ENCODE measurements at regions of chr15 and their contacts with region 1.

Region 1: DNA sequence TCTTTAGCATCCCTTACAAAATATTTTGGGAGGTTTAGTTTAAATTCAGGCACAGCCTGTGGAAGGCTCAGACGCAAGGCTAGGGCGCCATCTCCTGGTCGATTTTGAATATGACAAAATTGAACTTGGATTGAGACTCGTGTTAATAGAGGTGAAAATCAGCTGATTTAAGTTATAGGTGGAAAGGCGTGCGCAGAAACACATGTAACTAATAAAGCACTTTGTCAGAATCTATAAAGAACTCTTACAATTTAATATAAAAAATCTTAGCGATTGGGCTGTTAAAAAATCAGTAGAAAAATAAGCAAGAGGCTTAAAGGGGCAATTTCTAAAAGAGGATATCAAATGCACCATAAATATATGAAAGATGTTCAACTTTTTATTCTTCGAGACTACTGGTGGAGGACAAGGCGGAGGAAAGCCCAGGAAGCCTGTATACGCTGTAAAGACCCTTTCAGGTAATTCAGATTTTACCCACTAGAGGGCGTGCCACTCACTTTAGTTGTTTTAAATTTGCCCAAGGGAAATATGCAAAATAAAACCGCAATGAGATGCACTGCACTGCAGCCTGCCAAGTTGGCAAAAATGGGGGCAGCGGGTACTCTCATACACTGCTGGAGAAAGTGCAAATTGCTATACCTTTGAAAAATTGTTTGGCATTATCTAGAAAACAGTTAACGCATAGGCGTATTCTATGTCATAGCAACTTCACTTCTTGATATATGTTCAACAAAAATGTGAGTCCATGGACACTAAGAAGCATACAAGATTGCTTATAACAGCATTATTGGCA is 64.7 kb downstream of the SLC30A4 start:
- DNase-seq: peak; percentile 72
- H3K4me3 Mint-ChIP-seq: peak overlapping the region; percentile 76
- H3K27ac Mint-ChIP-seq: peak overlapping the region; percentile 91
- H3K4me1 Mint-ChIP-seq: peaks cover 49% of the 10 kb centered on the region
- H3K27me3 Mint-ChIP-seq: no peaks in the 10 kb centered on the region

Region 2: DNA sequence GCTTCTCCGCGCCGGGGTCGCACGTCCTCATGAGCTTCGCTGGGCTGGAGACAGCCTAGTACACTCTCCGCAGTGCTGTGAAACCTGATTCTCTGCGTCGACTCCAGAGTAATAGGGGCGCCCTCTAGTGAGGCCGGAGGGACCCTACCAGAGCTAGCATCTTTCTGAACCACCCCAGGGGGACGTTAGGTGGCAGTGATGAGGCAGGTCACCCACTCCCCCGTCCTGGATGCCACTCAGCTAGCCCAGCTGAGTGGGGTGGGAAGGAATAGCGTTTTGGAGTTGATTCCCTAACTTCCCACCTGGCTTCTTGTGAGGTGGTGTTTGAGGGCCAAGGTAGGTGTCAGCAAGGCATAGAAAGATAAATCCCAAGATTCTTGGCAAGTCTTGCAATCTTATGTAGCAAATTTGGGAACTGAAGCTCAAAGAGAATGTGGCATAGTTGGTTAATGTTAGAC is 339.7 kb before region 1 on chr15:
- intact Hi-C with region 1: loop called (anchors 2 kb)
- DNase-seq: peak; percentile 75
- H3K4me3 Mint-ChIP-seq: peak overlapping the region; percentile 70
- H3K27ac Mint-ChIP-seq: peak overlapping the region; percentile 74
- H3K4me1 Mint-ChIP-seq: peaks cover 26% of the 10 kb centered on the region
- H3K27me3 Mint-ChIP-seq: peaks cover 67% of the 10 kb centered on the region

Region 3: DNA sequence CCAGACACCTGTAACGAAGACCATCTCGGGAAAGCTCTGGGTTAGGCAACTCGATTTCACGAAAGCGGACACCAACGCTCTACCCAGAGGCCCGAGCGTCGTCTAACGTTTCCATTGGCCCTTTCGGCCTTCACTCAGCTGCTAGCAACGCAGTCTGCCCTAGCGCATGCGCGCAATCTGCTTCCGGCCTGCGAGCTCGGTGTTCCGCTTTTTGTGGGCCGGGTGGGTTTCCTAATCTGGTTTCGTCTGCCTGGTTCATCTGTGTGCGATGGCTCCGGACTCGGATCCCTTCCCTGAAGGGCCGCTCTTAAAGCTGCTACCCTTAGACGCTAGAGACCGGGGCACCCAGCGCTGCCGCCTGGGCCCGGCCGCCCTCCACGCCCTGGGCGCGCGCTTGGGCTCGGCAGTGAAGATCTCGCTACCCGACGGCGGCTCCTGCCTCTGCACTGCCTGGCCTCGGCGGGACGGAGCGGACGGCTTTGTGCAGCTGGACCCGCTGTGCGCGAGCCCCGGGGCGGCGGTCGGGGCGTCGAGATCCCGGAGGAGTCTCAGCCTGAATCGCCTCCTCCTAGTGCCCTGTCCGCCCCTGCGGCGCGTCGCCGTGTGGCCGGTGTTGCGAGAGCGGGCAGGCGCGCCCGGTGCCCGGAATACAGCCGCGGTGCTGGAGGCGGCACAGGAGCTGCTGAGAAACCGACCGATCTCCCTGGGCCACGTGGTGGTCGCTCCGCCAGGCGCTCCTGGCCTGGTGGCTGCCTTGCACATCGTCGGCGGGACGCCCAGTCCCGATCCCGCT is 55.5 kb before region 1 on chr15:
- intact Hi-C with region 1: loop called (anchors 1 kb)
- DNase-seq: peak; percentile 92
- H3K4me3 Mint-ChIP-seq: peak overlapping the region; percentile 94
- H3K27ac Mint-ChIP-seq: peak overlapping the region; percentile 84
- H3K4me1 Mint-ChIP-seq: peaks cover 40% of the 10 kb centered on the region
- H3K27me3 Mint-ChIP-seq: peaks cover 4% of the 10 kb centered on the region

Region 4: GRCh38 chr15:45429974-45430792 is 27.7 kb before region 1 on chr15:
- intact Hi-C with region 1: loop called (anchors 1 kb)
- DNase-seq: peak; percentile 82
- H3K4me3 Mint-ChIP-seq: peak overlapping the region; percentile 75
- H3K27ac Mint-ChIP-seq: no peak overlapping the region
- H3K4me1 Mint-ChIP-seq: no peaks in the 10 kb centered on the region
- H3K27me3 Mint-ChIP-seq: peaks cover 34% of the 10 kb centered on the region

Region 5: GRCh38 chr15:45587095-45587860 is 129.4 kb after region 1 on chr15 and contains the start of gene BLOC1S6:
- intact Hi-C with region 1: loop called (anchors 1 kb)
- DNase-seq: peak; percentile 84
- H3K4me3 Mint-ChIP-seq: peak within 1 kb of the TSS; percentile 100
- H3K27ac Mint-ChIP-seq: peak within 1 kb of the TSS; percentile 100
- H3K4me1 Mint-ChIP-seq: peaks cover 43% of the 10 kb centered on the region
- H3K27me3 Mint-ChIP-seq: no peaks in the 10 kb centered on the region
- total RNA-seq, gene BLOC1S6: 50.6 TPM in 2 replicates

Region 6: DNA sequence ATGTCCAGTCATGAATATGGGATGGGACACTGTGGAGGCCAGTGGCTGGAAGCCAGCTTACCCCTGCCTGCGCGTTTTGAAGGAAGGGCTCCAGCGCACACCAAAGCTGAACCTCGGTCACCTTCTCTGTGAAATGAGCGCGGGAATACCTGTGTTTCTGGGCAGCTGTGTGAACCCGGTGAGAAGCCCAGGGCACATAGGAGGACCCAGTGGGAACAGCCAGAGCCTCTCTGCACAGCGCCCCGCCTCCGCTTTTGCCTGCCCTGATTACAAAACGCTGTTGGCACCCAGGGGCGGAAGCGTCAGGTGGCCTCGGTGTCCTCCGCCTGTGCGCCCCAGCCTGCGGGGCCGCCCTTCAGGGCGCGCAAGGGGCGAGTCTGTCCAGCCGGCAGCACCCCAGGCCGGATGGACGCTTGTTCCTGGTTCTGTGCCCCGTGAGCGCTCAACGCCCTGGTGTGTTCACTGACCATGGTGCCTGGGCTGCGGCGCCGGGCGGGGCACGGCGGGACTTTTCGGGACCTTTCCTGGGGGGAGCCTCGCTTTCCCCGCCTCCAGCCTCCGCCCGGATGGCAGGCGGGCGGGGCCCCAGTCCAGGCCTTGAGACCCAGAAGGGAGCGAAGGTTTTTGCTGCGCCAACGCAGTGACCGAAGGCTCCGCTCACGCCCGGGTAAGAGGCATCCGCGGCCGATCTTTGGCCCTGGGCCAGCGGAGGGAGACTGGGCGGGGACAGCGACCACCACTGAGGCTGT is 176.8 kb after region 1 on chr15 and contains the start of gene SQOR:
- intact Hi-C with region 1: loop called (anchors 1 kb)
- DNase-seq: peak; percentile 67
- H3K4me3 Mint-ChIP-seq: peak within 1 kb of the TSS; percentile 99
- H3K27ac Mint-ChIP-seq: peak within 1 kb of the TSS; percentile 94
- H3K4me1 Mint-ChIP-seq: peaks cover 50% of the 10 kb centered on the region
- H3K27me3 Mint-ChIP-seq: peaks cover 16% of the 10 kb centered on the region
- total RNA-seq, gene SQOR: 96.0 and 100 TPM in 2 replicates

Measured in activated T-helper 1 cell treated with anti-CD3 and anti-CD28 coated beads, Interleukin-12 subunit alpha, Interleukin-12 subunit beta, Interleukin-2, Interleukin-4 antibody, amounts not matched to agents 30 ng/mL and 10 ng/mL and 1 ng/mL, durations not matched to agents 14 hours and 24 hours and 36 hours (primary cell).